Psoas muscle (tissue), 8 donors: ENCODE measurements at regions of chr11 and their contacts with region 1.

Region 1: GRCh38 chr11:65524741-65525545 is at the start of gene SCYL1:
- DNase-seq: peak; percentile 81 to 90
- ATAC-seq: peak; percentile 91 to 97 (median 94)
- H3K4me3 ChIP-seq: peak within 1 kb of the TSS; percentile 100
- H3K27ac ChIP-seq: peak within 1 kb of the TSS; percentile 98
- H3K4me1 ChIP-seq: peaks cover 17% of the 10 kb centered on the region
- H3K27me3 ChIP-seq: no peaks in the 10 kb centered on the region
- CTCF ChIP-seq: no peak
- total RNA-seq, gene SCYL1: 77.8 to 106 (median 92.6) TPM

Region 2: GRCh38 chr11:65354265-65355012 is 170.5 kb before region 1 on chr11 and contains the start of gene TIGD3:
- intact Hi-C with region 1: loop called in 1 of 2 experiments (anchors 5 kb)
- DNase-seq: peak; percentile 98
- ATAC-seq: peak; percentile 85 to 89 (median 88)
- H3K4me3 ChIP-seq: peak within 1 kb of the TSS; percentile 77
- H3K27ac ChIP-seq: peak within 1 kb of the TSS; percentile 62
- H3K4me1 ChIP-seq: peaks cover 31% of the 10 kb centered on the region
- H3K27me3 ChIP-seq: no peaks in the 10 kb centered on the region
- CTCF ChIP-seq: no peak
- total RNA-seq, gene TIGD3: 0.25 TPM in 1 of 4 donors, not detected in the others

Region 3: DNA sequence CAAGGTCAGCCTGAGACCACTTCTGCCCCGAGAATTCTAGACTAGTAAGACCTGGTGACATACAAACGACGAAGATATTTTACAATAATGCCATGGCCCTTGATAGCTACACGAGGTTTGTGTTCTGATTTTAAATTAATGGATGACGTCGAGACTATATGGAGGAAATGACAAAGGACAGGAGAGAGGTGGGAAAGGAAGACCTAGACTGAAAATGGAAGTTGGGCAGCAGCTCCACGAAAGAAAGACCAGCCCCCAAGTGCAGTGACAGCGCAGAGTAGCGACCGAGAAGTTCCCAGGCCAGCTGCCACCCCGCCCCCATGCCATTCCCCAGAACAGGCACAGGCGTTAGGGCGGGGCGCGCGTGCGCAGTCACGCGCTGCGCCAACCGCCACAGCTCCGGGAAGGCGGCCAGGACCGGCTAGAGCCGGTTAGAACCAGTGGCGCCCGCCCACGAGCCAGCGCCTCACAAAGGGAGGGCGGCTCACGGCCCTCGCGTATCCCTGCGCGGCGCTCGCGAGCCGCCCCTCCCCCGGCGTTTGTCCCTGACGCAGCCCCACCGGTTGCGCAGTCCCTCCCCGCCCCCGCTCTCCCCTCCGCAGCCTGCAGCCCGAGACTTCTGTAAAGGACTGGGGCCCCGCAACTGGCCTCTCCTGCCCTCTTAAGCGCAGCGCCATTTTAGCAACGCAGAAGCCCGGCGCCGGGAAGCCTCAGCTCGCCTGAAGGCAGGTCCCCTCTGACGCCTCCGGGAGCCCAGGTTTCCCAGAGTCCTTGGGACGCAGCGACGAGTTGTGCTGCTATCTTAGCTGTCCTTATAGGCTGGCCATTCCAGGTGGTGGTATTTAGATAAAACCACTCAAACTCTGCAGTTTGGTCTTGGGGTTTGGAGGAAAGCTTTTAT is 27.6 kb before region 1 on chr11:
- intact Hi-C with region 1: no loop called
- DNase-seq: peak; percentile 99
- ATAC-seq: peak; percentile 75 to 81 (median 76)
- H3K4me3 ChIP-seq: peak overlapping the region; percentile 92
- H3K27ac ChIP-seq: peak overlapping the region; percentile 99
- H3K4me1 ChIP-seq: peaks cover 43% of the 10 kb centered on the region
- H3K27me3 ChIP-seq: no peaks in the 10 kb centered on the region
- CTCF ChIP-seq: no peak